PC-9 (cell line): ENCODE measurements at regions of chr1 and their contacts with region 1.

Region 1: GRCh38 chr1:109397538-109398342 is at the start of gene SORT1:
- DNase-seq: peak; percentile 75 to 83
- H3K4me3 ChIP-seq: peak within 1 kb of the TSS; percentile 69
- H3K27ac ChIP-seq: no peak within 1 kb of the TSS
- H3K4me1 ChIP-seq: peaks cover 38% of the 10 kb centered on the region
- H3K27me3 ChIP-seq: no peaks in the 10 kb centered on the region
- CTCF ChIP-seq: peak; percentile 27; the same call in 1 of the 2 replicates
- total RNA-seq, gene SORT1: 25.7 and 27.9 TPM in 2 replicates

Region 2: GRCh38 chr1:109090196-109091077 is 307.3 kb before region 1 on chr1 and contains the start of gene TMEM167B:
- CTCF ChIA-PET with region 1: no interaction called
- POLR2A ChIA-PET with region 1: no interaction called
- intact Hi-C with region 1: loop called (anchors 1 kb)
- DNase-seq: peak; percentile 86 to 95
- H3K4me3 ChIP-seq: peak within 1 kb of the TSS; percentile 74
- H3K27ac ChIP-seq: peak within 1 kb of the TSS; percentile 78
- H3K4me1 ChIP-seq: peaks cover 25% of the 10 kb centered on the region
- H3K27me3 ChIP-seq: no peaks in the 10 kb centered on the region
- CTCF ChIP-seq: no peak
- total RNA-seq, gene TMEM167B: 19.2 and 23.6 TPM in 2 replicates

Region 3: DNA sequence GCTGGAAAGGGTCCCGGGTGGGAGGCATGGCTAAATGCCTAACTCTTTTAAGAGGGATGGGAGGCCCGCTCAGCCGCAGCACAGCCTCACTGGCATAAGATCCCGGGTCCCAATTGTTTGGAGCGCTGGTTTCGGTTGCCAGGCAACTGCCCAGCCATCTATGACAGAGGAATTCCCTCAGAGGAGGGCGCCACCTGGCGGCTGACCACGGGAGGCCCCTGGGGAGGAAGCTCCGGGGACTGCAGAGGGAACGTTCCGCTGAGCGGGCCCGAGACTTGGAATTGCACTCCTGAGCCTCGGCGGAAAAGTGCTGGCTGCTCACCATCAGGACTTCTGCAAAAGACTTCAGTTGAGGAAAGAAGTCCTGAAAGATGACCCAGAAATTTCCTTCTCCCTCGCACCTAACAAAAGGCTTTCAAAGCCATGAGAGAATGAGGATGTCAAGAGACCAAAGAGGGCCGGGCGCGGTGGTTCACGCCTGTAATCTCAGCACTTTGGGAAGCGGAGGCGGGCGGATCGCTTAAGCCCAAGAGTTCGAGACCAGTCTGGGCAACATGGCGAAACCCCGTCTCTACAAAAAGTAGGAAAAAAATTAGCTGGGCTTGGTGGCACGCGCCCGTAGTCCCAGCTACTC is 285.0 kb before region 1 on chr1:
- CTCF ChIA-PET with region 1: interaction called, 16 read pairs
- POLR2A ChIA-PET with region 1: no interaction called
- intact Hi-C with region 1: no loop called
- DNase-seq: peak; percentile 79 to 90
- H3K4me3 ChIP-seq: no peak overlapping the region; the same call in 1 of the 2 replicates
- H3K27ac ChIP-seq: no peak overlapping the region
- H3K4me1 ChIP-seq: 0 out of 2 replicates have a peak, but pooled peaks cover 3% of the 10 kb centered on the region
- H3K27me3 ChIP-seq: no peaks in the 10 kb centered on the region
- CTCF ChIP-seq: peak; percentile 100

Region 4: GRCh38 chr1:109201123-109201703 is 196.5 kb before region 1 on chr1:
- CTCF ChIA-PET with region 1: interaction called, 4 read pairs
- POLR2A ChIA-PET with region 1: interaction called, 16 read pairs
- intact Hi-C with region 1: loop called (anchors 2 kb)
- DNase-seq: peak; percentile 49 to 70
- H3K4me3 ChIP-seq: no peak overlapping the region
- H3K27ac ChIP-seq: no peak overlapping the region
- H3K4me1 ChIP-seq: peaks cover 23% of the 10 kb centered on the region
- H3K27me3 ChIP-seq: no peaks in the 10 kb centered on the region
- CTCF ChIP-seq: peak; percentile 92

Region 5: GRCh38 chr1:109277434-109278204 is 120.1 kb before region 1 on chr1:
- CTCF ChIA-PET with region 1: interaction called, 11 read pairs
- POLR2A ChIA-PET with region 1: no interaction called
- intact Hi-C with region 1: loop called (anchors 1 kb)
- DNase-seq: peak; percentile 67 to 76
- H3K4me3 ChIP-seq: no peak overlapping the region
- H3K27ac ChIP-seq: peak overlapping the region; percentile 78
- H3K4me1 ChIP-seq: peaks cover 70% of the 10 kb centered on the region
- H3K27me3 ChIP-seq: no peaks in the 10 kb centered on the region
- CTCF ChIP-seq: peak; percentile 96